ENCODE measurements at regions of chr3 and their contacts with region 1.

Region 1: GRCh38 chr3:150409512-150410310 is 1.6 kb downstream of the TSC22D2 start:
- DNase-seq: no peak
- ATAC-seq: peak; percentile 17
- H3K4me3 ChIP-seq: peak overlapping the region; percentile 87 to 93
- H3K27ac ChIP-seq: peak overlapping the region; percentile 100
- H3K4me1 ChIP-seq: peaks cover 14% of the 10 kb centered on the region
- H3K27me3 ChIP-seq: no peaks in the 10 kb centered on the region
- CTCF ChIP-seq: peak; percentile 79

Region 2: DNA sequence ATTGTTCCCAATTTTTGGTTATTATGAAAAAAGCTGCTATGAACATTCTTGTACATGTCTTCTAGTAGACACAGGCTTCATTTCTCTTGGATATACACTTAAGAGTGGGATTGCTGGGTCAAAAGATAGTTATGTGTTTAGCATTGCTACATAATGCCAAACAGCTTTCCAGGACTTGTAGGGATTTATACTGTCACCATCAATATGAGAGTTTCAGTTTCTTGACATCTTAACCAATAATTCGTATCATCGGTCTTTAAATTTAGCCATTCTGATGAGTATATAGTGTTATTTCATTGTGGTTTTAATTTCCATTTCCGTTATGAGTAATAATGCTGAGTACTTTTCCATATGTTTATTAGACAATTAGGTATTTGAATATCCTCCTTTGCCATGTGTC is 248.7 kb before region 1 on chr3:
- CTCF ChIA-PET with region 1: interaction called, 12 read pairs
- POLR2A ChIA-PET with region 1: no interaction called
- in situ Hi-C with region 1: no loop called
- intact Hi-C with region 1: no loop called
- DNase-seq: no peak
- ATAC-seq: no peak
- H3K4me3 ChIP-seq: no peak overlapping the region
- H3K27ac ChIP-seq: no peak overlapping the region
- H3K4me1 ChIP-seq: no peaks in the 10 kb centered on the region
- H3K27me3 ChIP-seq: no peaks in the 10 kb centered on the region
- CTCF ChIP-seq: no peak

Region 3: GRCh38 chr3:150238998-150239619 is 170.6 kb before region 1 on chr3:
- CTCF ChIA-PET with region 1: interaction called, 9 read pairs
- POLR2A ChIA-PET with region 1: interaction called, 3 read pairs
- in situ Hi-C with region 1: no loop called
- intact Hi-C with region 1: loop called (anchors 2 kb)
- DNase-seq: no peak
- ATAC-seq: peak; percentile 77
- H3K4me3 ChIP-seq: no peak overlapping the region
- H3K27ac ChIP-seq: peak overlapping the region; percentile 10; the same call in 1 of the 2 replicates
- H3K4me1 ChIP-seq: peaks cover 10% of the 10 kb centered on the region; the same call in 1 of the 2 replicates
- H3K27me3 ChIP-seq: no peaks in the 10 kb centered on the region
- CTCF ChIP-seq: peak; percentile 89

Region 4: DNA sequence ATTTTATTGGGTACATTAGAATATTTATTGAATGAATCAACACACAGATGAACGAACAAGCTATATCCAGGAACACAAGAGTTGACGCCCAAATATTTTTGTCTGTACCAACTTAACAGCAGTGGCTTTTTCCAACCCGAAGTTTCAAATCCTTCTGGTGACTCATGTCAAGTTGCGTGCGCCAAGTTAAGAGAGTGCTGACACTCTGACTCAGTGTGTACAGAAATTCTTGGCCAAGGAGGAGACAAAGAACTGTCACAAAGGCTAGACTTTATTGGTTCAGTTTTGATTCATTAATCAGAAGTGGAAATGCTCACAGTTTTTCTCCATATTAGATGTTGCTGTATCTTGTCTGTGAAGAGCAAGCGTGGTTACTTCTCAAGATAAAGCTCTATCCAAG is 61.2 kb before region 1 on chr3:
- CTCF ChIA-PET with region 1: interaction called, 4 read pairs
- POLR2A ChIA-PET with region 1: interaction called, 6 read pairs
- in situ Hi-C with region 1: no loop called
- intact Hi-C with region 1: loop called (anchors 2 kb)
- DNase-seq: peak; percentile 88
- ATAC-seq: peak; percentile 80
- H3K4me3 ChIP-seq: no peak overlapping the region; a peak in 1 of 4 replicates
- H3K27ac ChIP-seq: peak overlapping the region; percentile 100
- H3K4me1 ChIP-seq: peaks cover 92% of the 10 kb centered on the region
- H3K27me3 ChIP-seq: no peaks in the 10 kb centered on the region
- CTCF ChIP-seq: no peak

Region 5: GRCh38 chr3:150371741-150372254 is 37.9 kb before region 1 on chr3:
- CTCF ChIA-PET with region 1: interaction called, 3 read pairs
- POLR2A ChIA-PET with region 1: interaction called, 8 read pairs
- in situ Hi-C with region 1: no loop called
- intact Hi-C with region 1: loop called (anchors 2 kb)
- DNase-seq: peak; percentile 100
- ATAC-seq: peak; percentile 81
- H3K4me3 ChIP-seq: peak overlapping the region; percentile 39 to 62
- H3K27ac ChIP-seq: peak overlapping the region; percentile 100
- H3K4me1 ChIP-seq: peaks cover 66% of the 10 kb centered on the region
- H3K27me3 ChIP-seq: no peaks in the 10 kb centered on the region
- CTCF ChIP-seq: no peak

Region 6: GRCh38 chr3:150449169-150449721 is 39.5 kb after region 1 on chr3:
- CTCF ChIA-PET with region 1: no interaction called
- POLR2A ChIA-PET with region 1: no interaction called
- in situ Hi-C with region 1: no loop called
- intact Hi-C with region 1: loop called (anchors 5 kb)
- DNase-seq: peak; percentile 33
- ATAC-seq: peak; percentile 82
- H3K4me3 ChIP-seq: no peak overlapping the region
- H3K27ac ChIP-seq: peak overlapping the region; percentile 44
- H3K4me1 ChIP-seq: peaks cover 69% of the 10 kb centered on the region
- H3K27me3 ChIP-seq: no peaks in the 10 kb centered on the region
- CTCF ChIP-seq: no peak

Region 7: GRCh38 chr3:150495563-150496168 is 86.0 kb after region 1 on chr3:
- CTCF ChIA-PET with region 1: interaction called, 7 read pairs
- POLR2A ChIA-PET with region 1: interaction called, 3 read pairs
- in situ Hi-C with region 1: no loop called
- intact Hi-C with region 1: loop called (anchors 1 kb)
- DNase-seq: peak; percentile 61
- ATAC-seq: peak; percentile 39; the same call in 1 of the 2 replicates
- H3K4me3 ChIP-seq: no peak overlapping the region
- H3K27ac ChIP-seq: peak overlapping the region; percentile 71; the same call in 1 of the 2 replicates
- H3K4me1 ChIP-seq: peaks cover 18% of the 10 kb centered on the region
- H3K27me3 ChIP-seq: no peaks in the 10 kb centered on the region
- CTCF ChIP-seq: peak; percentile 76